ENCODE measurements at regions of chr6 and their contacts with region 1.

Region 1: GRCh38 chr6:87154993-87155841 is at the start of gene ZNF292:
- DNase-seq: peak; percentile 99
- H3K4me3 Mint-ChIP-seq: peak within 1 kb of the TSS; percentile 88
- H3K27ac Mint-ChIP-seq: peak within 1 kb of the TSS; percentile 97
- H3K4me1 Mint-ChIP-seq: peaks cover 41% of the 10 kb centered on the region
- H3K27me3 Mint-ChIP-seq: peaks cover 1% of the 10 kb centered on the region
- total RNA-seq, gene ZNF292: 51.9 to 52.5 TPM

Region 2: DNA sequence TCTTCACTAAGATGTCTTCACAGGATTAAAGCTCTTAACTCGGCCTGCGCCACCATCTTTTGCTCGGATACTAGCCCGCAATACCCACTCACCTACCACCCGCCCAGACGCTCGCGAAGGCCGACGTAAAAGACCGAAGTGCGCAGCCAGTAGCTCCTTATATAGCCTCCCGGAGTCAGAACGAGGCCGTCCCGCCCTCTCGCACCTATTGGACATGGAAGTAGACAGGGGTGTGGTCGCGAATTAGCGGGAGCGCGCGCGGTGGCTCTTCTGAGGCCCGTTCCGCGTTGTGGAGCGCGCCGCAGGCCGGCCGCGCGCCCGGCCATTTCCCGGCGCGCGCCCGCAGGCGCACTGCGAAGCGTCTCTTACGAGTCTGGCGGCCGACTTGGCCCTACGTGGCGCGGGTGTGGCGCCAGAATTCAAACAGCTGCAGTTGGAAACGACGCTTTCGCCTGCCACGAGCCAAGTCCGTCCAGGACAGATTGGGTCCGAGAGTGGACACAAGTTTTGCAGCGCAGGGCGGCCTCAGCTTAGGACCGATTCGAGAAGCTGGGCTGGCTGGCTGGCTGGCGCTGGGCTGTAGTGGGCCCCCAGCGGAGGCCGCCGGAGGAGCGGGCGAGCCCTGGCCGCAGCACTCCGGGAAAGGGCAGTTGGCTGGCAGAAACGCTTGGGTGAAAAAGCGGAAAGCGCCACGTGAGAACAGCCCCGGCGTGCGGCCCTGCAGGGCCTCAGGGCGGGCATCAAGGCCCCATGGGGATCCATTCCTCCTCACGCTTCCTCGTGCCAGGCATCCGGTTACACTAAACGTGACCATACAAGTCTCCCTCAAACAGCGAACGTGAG is 1476.4 kb before region 1 on chr6:
- CTCF ChIA-PET with region 1: no interaction called
- POLR2A ChIA-PET with region 1: no interaction called
- intact Hi-C with region 1: loop called (anchors 1 kb)
- DNase-seq: peak; percentile 98
- H3K4me3 Mint-ChIP-seq: peak overlapping the region; percentile 95
- H3K27ac Mint-ChIP-seq: peak overlapping the region; percentile 90
- H3K4me1 Mint-ChIP-seq: peaks cover 34% of the 10 kb centered on the region
- H3K27me3 Mint-ChIP-seq: no peaks in the 10 kb centered on the region

Region 3: DNA sequence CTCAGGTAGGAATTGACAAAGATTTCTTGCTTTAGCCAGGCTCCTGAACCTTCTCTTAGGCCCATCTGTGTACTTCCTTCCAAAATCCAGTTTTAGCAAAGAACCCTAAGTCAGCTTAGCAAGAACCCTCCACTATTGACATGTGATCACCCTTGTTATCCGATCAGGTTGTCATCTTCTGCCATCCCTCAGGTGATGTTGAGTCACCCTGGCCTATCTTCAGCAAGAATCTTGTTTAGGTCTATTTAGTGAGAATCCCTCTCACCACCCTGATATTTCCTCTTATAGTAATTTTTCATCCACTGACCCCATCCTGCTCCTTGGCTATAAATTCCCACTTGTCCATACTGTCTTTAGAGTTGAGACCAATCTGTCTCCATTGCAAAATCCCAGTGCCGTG is 22.0 kb before region 1 on chr6:
- CTCF ChIA-PET with region 1: no interaction called
- POLR2A ChIA-PET with region 1: no interaction called
- intact Hi-C with region 1: no loop called
- DNase-seq: no peak
- H3K4me3 Mint-ChIP-seq: no peak overlapping the region
- H3K27ac Mint-ChIP-seq: no peak overlapping the region
- H3K4me1 Mint-ChIP-seq: no peaks in the 10 kb centered on the region
- H3K27me3 Mint-ChIP-seq: no peaks in the 10 kb centered on the region

Region 4: GRCh38 chr6:87197547-87197946 is 42.3 kb after region 1 on chr6:
- CTCF ChIA-PET with region 1: interaction called, 5 read pairs
- POLR2A ChIA-PET with region 1: interaction called, 3 read pairs
- intact Hi-C with region 1: loop called (anchors 1 kb)
- DNase-seq: peak; percentile 49
- H3K4me3 Mint-ChIP-seq: no peak overlapping the region
- H3K27ac Mint-ChIP-seq: peak overlapping the region; percentile 38
- H3K4me1 Mint-ChIP-seq: peaks cover 67% of the 10 kb centered on the region
- H3K27me3 Mint-ChIP-seq: no peaks in the 10 kb centered on the region

Region 5: GRCh38 chr6:87251225-87251624 is 96.0 kb after region 1 on chr6:
- CTCF ChIA-PET with region 1: no interaction called
- POLR2A ChIA-PET with region 1: no interaction called
- intact Hi-C with region 1: loop called (anchors 5 kb)
- DNase-seq: no peak
- H3K4me3 Mint-ChIP-seq: no peak overlapping the region
- H3K27ac Mint-ChIP-seq: peak overlapping the region; percentile 33
- H3K4me1 Mint-ChIP-seq: peaks cover 14% of the 10 kb centered on the region
- H3K27me3 Mint-ChIP-seq: no peaks in the 10 kb centered on the region

Region 6: DNA sequence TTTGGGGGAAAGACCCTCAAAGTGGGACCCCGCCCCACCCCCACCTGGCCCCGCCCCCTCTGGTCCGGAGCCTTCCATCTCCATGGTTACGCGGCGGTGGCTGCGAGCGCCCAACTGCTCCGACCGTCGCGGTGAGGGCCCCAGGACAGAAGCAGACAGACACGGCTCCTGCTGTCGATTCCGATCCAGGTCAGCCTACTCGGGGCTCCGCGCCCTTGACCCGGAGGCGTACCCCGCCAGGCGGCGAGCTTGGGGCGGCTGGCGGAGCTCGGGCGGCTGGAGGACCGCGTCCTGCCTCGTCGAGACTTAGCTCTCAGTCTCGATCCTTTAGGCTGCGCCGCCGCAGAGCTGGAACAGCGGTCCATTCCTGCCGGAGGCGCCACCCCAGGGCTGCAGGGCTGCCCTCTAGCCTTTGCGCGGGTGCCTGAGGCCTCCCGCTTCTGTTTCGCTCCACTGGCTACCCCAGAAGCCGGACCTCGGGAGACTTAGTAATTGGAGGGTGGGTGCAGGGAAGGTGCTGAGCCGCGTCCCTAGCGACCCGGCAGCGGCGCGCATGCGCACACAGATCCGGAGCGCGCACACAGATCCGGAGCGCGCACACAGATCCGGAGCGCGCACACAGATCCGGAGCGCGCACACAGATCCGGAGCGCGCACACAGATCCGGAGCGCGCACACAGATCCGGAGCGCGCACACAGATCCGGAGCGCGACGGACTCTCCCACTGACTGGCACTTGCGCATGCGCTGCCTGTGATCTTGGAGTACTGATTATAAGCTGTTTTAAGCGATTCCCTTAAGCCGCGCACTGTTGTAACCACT is 252.9 kb after region 1 on chr6 and contains the start of gene CFAP206:
- CTCF ChIA-PET with region 1: no interaction called
- POLR2A ChIA-PET with region 1: no interaction called
- intact Hi-C with region 1: loop called (anchors 2 kb)
- DNase-seq: peak; percentile 82
- H3K4me3 Mint-ChIP-seq: peak within 1 kb of the TSS; percentile 84
- H3K27ac Mint-ChIP-seq: peak within 1 kb of the TSS; percentile 64
- H3K4me1 Mint-ChIP-seq: peaks cover 4% of the 10 kb centered on the region
- H3K27me3 Mint-ChIP-seq: peaks cover 10% of the 10 kb centered on the region
- total RNA-seq, gene CFAP206: not detected

Region 7: GRCh38 chr6:87701676-87702588 is 546.7 kb after region 1 on chr6 and contains the start of gene AKIRIN2:
- CTCF ChIA-PET with region 1: no interaction called
- POLR2A ChIA-PET with region 1: interaction called, 5 read pairs
- intact Hi-C with region 1: loop called (anchors 1 kb)
- DNase-seq: peak; percentile 98
- H3K4me3 Mint-ChIP-seq: peak within 1 kb of the TSS; percentile 86
- H3K27ac Mint-ChIP-seq: peak within 1 kb of the TSS; percentile 91
- H3K4me1 Mint-ChIP-seq: peaks cover 43% of the 10 kb centered on the region
- H3K27me3 Mint-ChIP-seq: no peaks in the 10 kb centered on the region
- total RNA-seq, gene AKIRIN2: 45.7 to 46.0 TPM

Region 8: GRCh38 chr6:89080542-89081422 is 1925.6 kb after region 1 on chr6 and contains the start of gene PNRC1:
- CTCF ChIA-PET with region 1: no interaction called
- POLR2A ChIA-PET with region 1: no interaction called
- intact Hi-C with region 1: loop called (anchors 2 kb)
- DNase-seq: peak; percentile 100
- H3K4me3 Mint-ChIP-seq: peak within 1 kb of the TSS; percentile 93
- H3K27ac Mint-ChIP-seq: peak within 1 kb of the TSS; percentile 99
- H3K4me1 Mint-ChIP-seq: peaks cover 33% of the 10 kb centered on the region
- H3K27me3 Mint-ChIP-seq: no peaks in the 10 kb centered on the region
- total RNA-seq, gene PNRC1: 95.1 TPM

Measured in activated CD4-positive, alpha-beta memory T cell treated with anti-CD3 and anti-CD28 coated beads for 36 hours (primary cell).